CD8-positive, alpha-beta T cell (primary cell): ENCODE measurements at regions of chr19 and their contacts with region 1.

Region 1: DNA sequence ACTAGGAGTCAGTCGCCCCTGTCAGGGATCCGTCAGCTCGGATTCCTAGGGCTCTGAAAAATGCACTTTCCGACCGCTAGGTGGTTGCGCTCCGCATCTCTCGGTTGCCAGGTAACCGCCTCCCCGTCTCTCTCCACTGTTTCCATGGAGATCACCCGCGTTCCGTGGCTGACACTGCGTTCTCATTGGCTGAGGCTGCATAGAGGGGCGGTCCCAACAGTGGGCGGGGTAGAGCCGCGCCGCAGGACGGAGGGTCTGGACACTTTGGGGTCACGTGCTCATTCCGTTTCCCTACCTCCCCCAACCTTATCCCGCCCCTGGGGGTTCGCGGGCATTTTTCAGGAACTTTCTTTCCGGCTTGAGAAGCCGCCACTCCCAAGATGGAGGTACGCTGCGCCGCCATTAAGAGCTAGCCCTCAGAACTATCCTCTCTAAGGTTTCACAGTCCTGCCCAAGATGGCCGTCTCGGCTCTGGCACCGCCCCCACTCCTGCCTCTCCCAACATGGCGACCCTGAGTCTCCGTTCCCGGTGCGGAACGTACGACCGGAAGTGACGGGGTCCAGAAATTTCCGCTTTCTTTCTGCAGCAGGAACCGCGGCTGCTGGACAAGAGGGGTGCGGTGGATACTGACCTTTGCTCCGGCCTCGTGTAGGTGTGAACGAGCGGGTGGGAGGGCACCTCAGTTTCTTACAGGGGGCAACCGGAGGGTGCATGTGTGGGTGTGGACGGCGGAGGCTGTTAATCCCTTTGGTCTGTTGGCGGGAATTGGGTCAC is at the starts of genes ODAD3 and PRKCSH:
- DNase-seq: peak; percentile 94 to 99 (median 97)
- ATAC-seq: peak; percentile 95
- H3K4me3 ChIP-seq: peak within 1 kb of the TSS; percentile 97 to 98
- H3K4me3 Mint-ChIP-seq: peak within 1 kb of the TSS; percentile 99
- H3K27ac ChIP-seq: peak within 1 kb of the TSS; percentile 77 to 84
- H3K27ac Mint-ChIP-seq: peak within 1 kb of the TSS; percentile 95
- H3K4me1 ChIP-seq: peaks cover 16% of the 10 kb centered on the region
- H3K4me1 Mint-ChIP-seq: peaks cover 25% of the 10 kb centered on the region
- H3K27me3 ChIP-seq: no peaks in the 10 kb centered on the region
- H3K27me3 Mint-ChIP-seq: peaks cover 2% of the 10 kb centered on the region
- CTCF ChIP-seq: peak; percentile 92
- total RNA-seq, gene ODAD3: not detected
- total RNA-seq, gene PRKCSH: 253 to 255 TPM

Region 2: DNA sequence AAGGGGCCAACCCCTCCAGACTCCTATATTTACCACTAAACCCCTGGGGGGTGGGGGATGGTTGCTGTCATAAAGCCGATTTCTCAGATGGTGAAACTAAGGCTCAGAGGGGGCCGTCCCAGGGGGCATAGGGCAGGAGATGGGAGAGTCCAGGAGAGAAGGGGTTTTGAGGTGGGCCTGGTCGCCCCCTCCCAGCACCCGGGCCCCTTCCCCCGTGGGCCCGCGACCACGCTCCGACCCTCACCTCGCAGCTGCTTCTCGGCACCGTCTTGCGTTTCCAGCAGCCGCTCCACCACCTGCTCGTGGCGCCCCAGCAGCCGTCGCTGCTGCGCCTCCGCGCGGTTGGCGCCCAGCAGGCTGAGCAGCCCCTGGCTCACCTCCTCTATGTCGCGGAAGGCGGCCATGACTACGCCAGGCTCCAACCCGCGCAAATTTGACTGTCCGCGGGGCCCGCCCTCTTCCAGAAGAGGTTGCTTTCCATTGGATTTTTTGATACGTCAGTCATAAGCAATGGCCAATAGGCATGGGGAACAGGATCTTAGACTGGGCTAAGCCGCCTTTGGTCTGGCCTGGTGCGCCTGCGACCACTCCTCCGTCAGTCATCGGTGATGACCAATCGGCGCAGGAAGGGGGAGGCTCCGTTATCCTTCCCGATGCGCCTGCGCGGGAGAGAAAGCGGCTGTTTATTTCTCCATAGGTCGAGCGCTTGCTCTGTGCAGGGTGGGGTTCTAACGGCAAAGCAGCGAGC is 279.7 kb before region 1 on chr19 and contains the start of gene SPC24:
- CTCF ChIA-PET with region 1: no interaction called
- POLR2A ChIA-PET with region 1: no interaction called
- intact Hi-C with region 1: loop called in 1 of 2 experiments (anchors 1 kb)
- DNase-seq: peak; percentile 76 to 97 (median 87)
- ATAC-seq: peak; percentile 96
- H3K4me3 ChIP-seq: peak within 1 kb of the TSS; percentile 52 to 62
- H3K4me3 Mint-ChIP-seq: peak within 1 kb of the TSS; percentile 87
- H3K27ac ChIP-seq: peak within 1 kb of the TSS in 1 of 2 experiments; percentile 51
- H3K27ac Mint-ChIP-seq: peak within 1 kb of the TSS; percentile 27
- H3K4me1 ChIP-seq: peaks cover 13% of the 10 kb centered on the region
- H3K4me1 Mint-ChIP-seq: peaks cover 14% of the 10 kb centered on the region
- H3K27me3 ChIP-seq: no peaks in the 10 kb centered on the region
- H3K27me3 Mint-ChIP-seq: no peaks in the 10 kb centered on the region
- CTCF ChIP-seq: no peak
- total RNA-seq, gene SPC24: 0.79 to 0.86 TPM

Region 3: GRCh38 chr19:11374433-11375142 is 60.7 kb before region 1 on chr19 and contains the start of gene SWSAP1:
- CTCF ChIA-PET with region 1: interaction called, 6 read pairs
- POLR2A ChIA-PET with region 1: interaction called, 11 read pairs
- intact Hi-C with region 1: loop called (anchors 1 kb)
- DNase-seq: peak; percentile 91 to 100 (median 96)
- ATAC-seq: peak; percentile 88
- H3K4me3 ChIP-seq: peak within 1 kb of the TSS; percentile 73 to 80
- H3K4me3 Mint-ChIP-seq: no peak within 1 kb of the TSS
- H3K27ac ChIP-seq: peak within 1 kb of the TSS; percentile 83 to 98
- H3K27ac Mint-ChIP-seq: no peak within 1 kb of the TSS
- H3K4me1 ChIP-seq: peaks cover 28% of the 10 kb centered on the region
- H3K4me1 Mint-ChIP-seq: peaks cover 20% of the 10 kb centered on the region
- H3K27me3 ChIP-seq: no peaks in the 10 kb centered on the region
- H3K27me3 Mint-ChIP-seq: no peaks in the 10 kb centered on the region
- CTCF ChIP-seq: no peak
- total RNA-seq, gene SWSAP1: 2.2 to 2.4 TPM

Region 4: GRCh38 chr19:11482384-11483050 is 47.3 kb after region 1 on chr19:
- CTCF ChIA-PET with region 1: interaction called, 3 read pairs
- POLR2A ChIA-PET with region 1: interaction called, 3 read pairs
- intact Hi-C with region 1: loop called in 1 of 2 experiments (anchors 1 kb)
- DNase-seq: peak; percentile 75 to 95 (median 83)
- ATAC-seq: peak; percentile 74
- H3K4me3 ChIP-seq: peak overlapping the region; percentile 17 to 27
- H3K4me3 Mint-ChIP-seq: peak overlapping the region; percentile 60
- H3K27ac ChIP-seq: no peak overlapping the region
- H3K27ac Mint-ChIP-seq: no peak overlapping the region
- H3K4me1 ChIP-seq: peaks cover 22% of the 10 kb centered on the region
- H3K4me1 Mint-ChIP-seq: peaks cover 22% of the 10 kb centered on the region
- H3K27me3 ChIP-seq: peaks cover 18 to 26% of the 10 kb centered on the region in 2 experiments
- H3K27me3 Mint-ChIP-seq: peaks cover 28% of the 10 kb centered on the region
- CTCF ChIP-seq: peak; percentile 88

Region 5: GRCh38 chr19:11558881-11559828 is 123.9 kb after region 1 on chr19 and contains the start of gene ELOF1:
- CTCF ChIA-PET with region 1: no interaction called
- POLR2A ChIA-PET with region 1: no interaction called
- intact Hi-C with region 1: loop called in 1 of 2 experiments (anchors 1 kb)
- DNase-seq: peak; percentile 90 to 99 (median 97)
- ATAC-seq: peak; percentile 94
- H3K4me3 ChIP-seq: peak within 1 kb of the TSS; percentile 83 to 87
- H3K4me3 Mint-ChIP-seq: peak within 1 kb of the TSS; percentile 93
- H3K27ac ChIP-seq: peak within 1 kb of the TSS; percentile 74 to 78
- H3K27ac Mint-ChIP-seq: peak within 1 kb of the TSS; percentile 93
- H3K4me1 ChIP-seq: peaks cover 29% of the 10 kb centered on the region
- H3K4me1 Mint-ChIP-seq: peaks cover 39% of the 10 kb centered on the region
- H3K27me3 ChIP-seq: no peaks in the 10 kb centered on the region
- H3K27me3 Mint-ChIP-seq: no peaks in the 10 kb centered on the region
- CTCF ChIP-seq: no peak
- total RNA-seq, gene ELOF1: 40.3 to 41.0 TPM